Cardiac septum (tissue), 1 donor: ENCODE measurements at regions of chr18 and their contacts with region 1.

Region 1: GRCh38 chr18:9614401-9615279 is at the start of gene PPP4R1:
- DNase-seq: peak; percentile 92
- total RNA-seq, gene PPP4R1: 83.1 TPM

Region 2: DNA sequence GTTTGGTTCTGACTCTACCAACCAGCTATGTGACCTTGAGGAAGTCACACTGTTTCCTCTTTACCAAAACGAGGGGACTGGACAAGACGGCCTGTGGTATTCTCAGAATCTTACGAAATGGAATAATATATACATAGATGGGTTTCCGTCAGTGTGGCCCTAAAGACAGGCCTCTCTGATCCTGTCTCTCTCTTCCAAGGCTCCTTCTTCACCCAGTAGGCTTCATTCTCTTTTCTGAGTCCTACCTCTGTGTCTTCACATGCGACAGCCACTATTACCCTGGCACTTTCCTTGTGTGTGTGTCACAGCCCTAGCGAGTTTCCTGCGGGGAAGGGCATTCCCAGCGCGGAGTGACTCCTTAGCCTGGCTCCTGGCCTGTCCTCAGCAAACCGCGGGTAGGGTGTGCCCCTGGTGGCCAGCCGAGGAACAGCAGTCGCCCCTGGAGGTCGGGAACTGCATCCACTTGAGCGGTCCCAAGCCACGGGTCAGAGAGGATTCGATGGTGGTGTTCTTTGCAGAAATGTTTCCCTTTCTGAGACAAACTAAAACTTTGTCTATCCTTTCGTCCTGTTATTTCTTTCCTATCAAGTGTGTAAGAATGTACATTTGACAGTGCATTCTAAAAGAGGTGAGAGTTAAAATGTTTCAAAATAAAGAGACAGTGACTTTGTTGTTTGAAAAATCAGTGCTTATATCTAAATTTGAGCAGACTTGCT is 156.8 kb after region 1 on chr18:
- intact Hi-C with region 1: loop called (anchors 5 kb)
- DNase-seq: peak; percentile 93

Region 3: GRCh38 chr18:9913526-9914333 is 299.1 kb after region 1 on chr18 and contains the start of gene VAPA:
- intact Hi-C with region 1: loop called (anchors 10 kb)
- DNase-seq: peak; percentile 98
- total RNA-seq, gene VAPA: 232 TPM

Region 4: DNA sequence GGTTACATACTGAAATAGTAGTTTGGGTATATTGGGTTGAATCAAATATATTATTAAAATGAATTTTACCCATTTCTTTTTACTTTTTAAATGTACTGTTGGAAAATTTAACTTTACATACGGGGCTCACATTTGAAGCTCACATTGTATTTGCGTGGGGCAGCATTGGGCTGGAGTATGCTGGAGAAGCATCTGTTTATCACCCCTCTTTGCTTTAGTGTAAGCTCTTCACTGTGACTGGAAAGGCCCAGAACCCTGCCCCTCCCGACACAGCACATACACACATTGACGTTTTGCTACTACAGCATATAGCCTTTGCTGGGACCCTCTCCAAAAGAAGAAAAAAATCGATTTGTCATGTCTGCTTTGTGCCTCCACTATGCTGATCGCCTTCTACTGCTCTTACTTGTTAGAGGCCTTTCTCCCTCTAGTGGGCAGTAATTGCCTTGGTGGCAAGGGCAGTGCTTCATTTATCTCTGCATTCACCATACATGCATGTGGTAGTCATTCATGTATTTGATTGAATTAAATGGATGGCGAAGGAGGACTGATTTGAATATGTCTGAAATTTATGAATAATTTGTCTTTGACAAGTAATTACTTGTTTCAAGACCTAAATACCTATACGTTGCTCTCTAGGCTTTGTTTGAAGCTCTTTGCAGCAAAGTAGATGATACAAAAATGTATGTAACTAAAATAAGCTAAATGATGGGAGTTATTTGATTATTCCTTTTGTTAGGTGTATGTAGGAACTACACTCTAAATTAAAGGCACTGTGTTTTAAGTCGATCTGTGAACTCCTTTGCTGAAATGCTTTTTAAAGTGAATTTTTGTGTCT is 336.6 kb after region 1 on chr18:
- intact Hi-C with region 1: loop called (anchors 5 kb)
- DNase-seq: no peak

Region 5: GRCh38 chr18:10081492-10081891 is 466.9 kb after region 1 on chr18:
- intact Hi-C with region 1: no loop called
- DNase-seq: no peak

Region 6: DNA sequence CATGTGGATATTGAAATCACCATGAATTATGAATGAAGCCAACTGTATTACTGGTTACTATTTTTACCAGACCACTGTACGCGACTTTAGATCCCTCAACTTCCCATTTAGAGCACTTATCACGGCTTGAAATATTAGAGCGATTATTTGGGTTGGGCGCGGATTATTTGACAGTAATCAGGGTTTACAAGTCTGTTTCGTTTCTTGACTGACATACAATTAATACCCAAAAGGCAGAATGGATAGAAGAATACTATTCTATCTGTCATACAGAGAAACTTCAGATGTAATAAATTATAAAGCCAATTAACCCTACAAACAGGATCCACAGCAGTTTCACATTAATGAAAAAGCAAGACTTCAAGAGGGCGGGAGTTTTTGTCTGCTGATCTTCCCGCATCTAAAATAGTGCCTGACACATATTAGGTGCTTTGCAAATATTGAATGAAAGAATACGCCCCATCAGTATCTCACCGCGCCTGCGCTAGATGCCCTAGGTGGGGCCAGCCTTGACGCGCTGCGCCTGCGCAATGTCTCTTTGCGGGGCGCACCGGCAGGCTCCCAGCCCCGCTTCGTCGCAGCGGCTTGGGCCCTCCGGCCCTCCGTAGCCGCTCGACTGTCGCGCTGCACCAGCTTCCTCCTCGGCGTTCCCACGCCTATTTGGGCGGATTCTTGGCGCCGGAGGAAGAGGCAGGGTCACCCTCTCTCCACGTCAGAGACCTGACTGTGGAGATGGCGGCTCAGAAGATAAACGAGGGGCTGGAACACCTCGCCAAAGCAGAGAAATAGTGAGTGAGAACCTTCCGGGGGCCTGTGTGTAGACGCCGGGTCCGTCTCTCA is 911.0 kb after region 1 on chr18 and contains the start of gene NAPG:
- intact Hi-C with region 1: loop called (anchors 10 kb)
- DNase-seq: peak; percentile 96
- total RNA-seq, gene NAPG: 44.8 TPM